Heart left ventricle (tissue), 16 donors: ENCODE measurements at regions of chr16 and their contacts with region 1.

Region 1: DNA sequence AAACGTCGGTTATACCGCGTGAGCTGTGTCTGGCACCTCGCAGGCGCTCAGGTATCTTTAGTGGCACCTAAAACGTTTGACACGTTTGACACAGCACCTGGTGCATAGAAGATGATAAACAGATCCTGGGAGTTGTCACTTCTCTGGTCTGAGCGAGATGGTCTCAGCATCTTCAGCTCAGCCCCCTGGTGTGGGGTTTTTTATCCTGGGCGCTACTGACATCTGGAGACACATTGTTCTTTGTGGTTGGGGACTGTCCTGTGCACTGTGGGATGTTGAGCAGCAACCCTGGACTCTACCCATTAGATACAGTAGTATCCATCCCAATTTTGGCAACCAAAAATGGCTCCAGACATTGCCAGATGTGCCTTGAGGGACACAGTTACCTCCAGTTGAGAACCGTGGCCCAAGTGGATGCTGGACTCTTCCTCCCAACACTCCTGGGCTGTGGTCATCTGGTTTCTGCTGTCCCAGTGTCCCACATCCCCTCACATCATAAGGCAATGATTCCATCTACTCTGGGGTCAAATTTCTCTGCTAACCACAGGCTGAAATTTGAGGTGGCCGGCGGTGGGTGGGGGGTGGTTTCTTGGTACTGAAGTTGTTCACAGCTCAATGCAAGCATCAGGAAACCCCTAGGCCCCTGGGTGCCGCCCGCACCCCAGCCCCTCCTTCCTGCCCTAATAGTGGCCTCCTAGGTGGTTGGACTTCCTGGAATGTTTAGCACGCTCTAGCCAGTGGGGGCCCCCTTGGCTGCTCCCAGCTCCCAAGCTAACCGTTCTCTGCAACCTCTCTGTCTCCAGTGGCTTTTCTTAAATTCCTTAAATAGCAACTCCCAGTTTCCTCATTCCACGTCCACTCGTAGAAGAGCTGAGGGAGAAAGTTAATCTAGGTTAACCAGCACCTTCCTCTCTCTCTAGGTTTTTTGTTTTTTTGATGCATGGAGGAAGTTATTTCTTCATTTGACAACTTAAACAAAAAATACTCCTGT is 124.8 kb downstream of the ABCC1 start:
- DNase-seq: no peak
- ATAC-seq: peak in 3 of 4 donors; percentile 17 to 54 (median 33)
- H3K4me3 ChIP-seq: no peak overlapping the region
- H3K27ac ChIP-seq: peak overlapping the region in 5 of 12 donors; percentile 2 to 74 (median 33)
- H3K4me1 ChIP-seq: peaks cover 0 to 36% (median 21%) of the 10 kb centered on the region in 12 donors
- H3K27me3 ChIP-seq: no peaks in the 10 kb centered on the region
- CTCF ChIP-seq: no peak
- POLR2A ChIP-seq: no peak

Region 2: DNA sequence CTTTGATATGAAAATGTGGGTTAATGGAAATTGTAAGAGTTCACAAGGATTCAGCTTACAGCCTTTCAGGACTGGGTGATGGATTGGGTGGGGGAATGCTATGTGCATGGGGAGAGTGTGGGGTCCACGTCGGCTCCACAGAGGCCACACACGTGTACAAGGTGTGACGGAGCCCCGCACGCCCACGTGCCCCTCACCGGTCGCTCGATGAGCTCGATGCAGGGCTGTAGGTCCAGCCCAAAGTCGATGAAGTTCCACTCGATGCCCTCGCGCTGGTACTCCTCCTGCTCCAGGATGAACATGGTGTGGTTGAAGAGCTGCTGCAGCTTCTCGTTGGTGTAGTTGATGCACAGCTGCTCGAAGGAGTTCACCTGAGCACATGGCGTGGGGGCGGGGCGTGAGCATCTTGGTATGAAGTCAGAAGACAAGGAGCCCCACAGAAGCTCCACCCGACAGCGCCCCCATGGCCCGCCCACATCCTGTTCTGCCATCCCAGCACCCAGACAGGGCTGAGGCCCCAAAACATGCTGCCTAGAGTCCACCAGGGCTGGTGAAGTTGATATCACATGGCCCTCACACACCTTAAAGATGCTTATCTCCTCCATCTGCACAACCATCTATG is 316.4 kb before region 1 on chr16:
- intact Hi-C with region 1: no loop called
- DNase-seq: no peak
- ATAC-seq: no peak
- H3K4me3 ChIP-seq: no peak overlapping the region
- H3K27ac ChIP-seq: peak overlapping the region in 1 of 12 donors; percentile 22
- H3K4me1 ChIP-seq: no peaks in the 10 kb centered on the region
- H3K27me3 ChIP-seq: peaks cover 0 to 6% (median 0%) of the 10 kb centered on the region in 9 donors
- CTCF ChIP-seq: no peak
- POLR2A ChIP-seq: no peak

Region 3: GRCh38 chr16:15874745-15875314 is 199.4 kb before region 1 on chr16:
- intact Hi-C with region 1: loop called in 1 of 10 experiments (anchors 10 kb)
- DNase-seq: peak in 4 of 5 donors; percentile 29 to 40 (median 36)
- ATAC-seq: peak in 3 of 4 donors; percentile 76 to 90 (median 77)
- H3K4me3 ChIP-seq: no peak overlapping the region
- H3K27ac ChIP-seq: peak overlapping the region in 4 of 12 donors; percentile 9 to 76 (median 19)
- H3K4me1 ChIP-seq: peaks cover 0 to 16% (median 3%) of the 10 kb centered on the region in 12 donors
- H3K27me3 ChIP-seq: no peaks in the 10 kb centered on the region
- CTCF ChIP-seq: peak; percentile 49 to 82 (median 70)
- POLR2A ChIP-seq: no peak

Region 4: DNA sequence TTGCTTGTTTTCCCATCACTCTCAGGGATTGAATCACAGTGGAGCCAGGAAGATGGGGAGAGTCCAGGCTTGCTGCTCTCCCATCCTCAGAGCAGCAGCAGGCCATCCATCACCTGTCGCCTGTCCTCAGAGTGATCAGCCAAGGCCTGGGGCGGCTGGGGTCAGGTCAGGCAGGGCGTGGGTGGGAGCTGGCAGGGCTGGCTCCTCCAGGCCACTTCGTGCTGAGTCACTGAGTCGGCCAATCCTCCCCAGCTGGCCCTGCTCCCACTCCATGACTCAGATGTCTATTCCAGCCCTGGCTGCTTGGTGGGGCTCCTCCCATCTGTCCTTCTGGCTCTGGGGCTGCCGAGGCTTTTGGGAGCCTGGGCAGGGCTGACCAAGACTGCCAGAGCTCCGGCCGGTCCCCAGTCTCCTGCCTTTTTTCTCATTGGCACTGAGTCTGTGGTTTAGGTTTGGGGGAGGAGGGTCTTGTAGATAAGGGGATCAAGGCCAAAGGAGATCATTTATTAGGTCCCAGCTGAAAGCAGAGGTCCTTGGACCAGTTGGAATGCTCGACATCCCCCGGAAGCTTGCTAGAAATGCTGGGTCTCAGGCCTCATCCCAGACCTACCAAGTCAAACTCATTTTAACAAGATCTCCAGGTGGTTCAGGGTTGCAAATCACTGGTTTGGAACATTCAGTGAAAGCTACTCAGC is 52.1 kb before region 1 on chr16:
- intact Hi-C with region 1: loop called in 1 of 10 experiments (anchors 10 kb)
- DNase-seq: peak; percentile 94 to 98 (median 95)
- ATAC-seq: peak; percentile 97 to 99 (median 98)
- H3K4me3 ChIP-seq: peak overlapping the region in 1 of 12 donors; percentile 14
- H3K27ac ChIP-seq: peak overlapping the region; percentile 62 to 88 (median 81)
- H3K4me1 ChIP-seq: peaks cover 8 to 38% (median 22%) of the 10 kb centered on the region in 12 donors
- H3K27me3 ChIP-seq: no peaks in the 10 kb centered on the region
- CTCF ChIP-seq: no peak
- POLR2A ChIP-seq: no peak

Region 5: DNA sequence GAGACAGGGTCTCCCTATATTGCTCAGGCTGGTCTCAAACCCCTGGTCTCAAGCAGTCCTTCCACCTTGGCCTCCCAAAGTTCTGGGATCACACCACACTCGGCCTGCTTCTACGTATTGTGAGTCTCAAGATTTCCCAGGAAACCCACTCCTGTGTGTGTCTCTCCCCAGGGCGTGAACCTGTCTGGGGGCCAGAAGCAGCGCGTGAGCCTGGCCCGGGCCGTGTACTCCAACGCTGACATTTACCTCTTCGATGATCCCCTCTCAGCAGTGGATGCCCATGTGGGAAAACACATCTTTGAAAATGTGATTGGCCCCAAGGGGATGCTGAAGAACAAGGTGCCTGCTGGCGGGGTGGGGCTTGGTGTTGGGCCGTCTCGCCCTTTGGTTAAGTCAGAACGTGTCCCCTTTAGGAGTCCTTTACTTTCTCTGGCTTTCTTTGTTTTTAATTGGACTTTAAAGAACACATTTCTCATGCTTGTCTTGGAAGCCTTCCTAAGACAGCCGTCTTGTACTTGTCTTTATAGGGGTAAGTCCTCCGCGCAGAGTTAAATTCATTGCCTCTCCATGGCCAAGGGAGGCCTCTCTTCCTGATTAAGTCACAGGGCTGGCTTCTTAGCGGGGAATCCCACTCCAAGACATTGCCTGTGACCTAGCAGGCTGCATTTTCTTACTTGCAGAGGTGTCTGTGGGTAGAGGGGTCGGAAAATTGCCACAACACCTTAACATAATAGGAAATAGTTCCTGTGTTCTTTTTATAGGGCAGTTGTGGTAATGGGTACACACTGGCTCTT is 12.7 kb after region 1 on chr16:
- intact Hi-C with region 1: no loop called
- DNase-seq: no peak
- ATAC-seq: no peak
- H3K4me3 ChIP-seq: no peak overlapping the region
- H3K27ac ChIP-seq: peak overlapping the region in 1 of 12 donors; percentile 83
- H3K4me1 ChIP-seq: peaks cover 0 to 10% (median 0%) of the 10 kb centered on the region in 12 donors
- H3K27me3 ChIP-seq: no peaks in the 10 kb centered on the region
- CTCF ChIP-seq: no peak
- POLR2A ChIP-seq: no peak